ENCODE measurements at regions of chr3 and their contacts with region 1.

Region 1: DNA sequence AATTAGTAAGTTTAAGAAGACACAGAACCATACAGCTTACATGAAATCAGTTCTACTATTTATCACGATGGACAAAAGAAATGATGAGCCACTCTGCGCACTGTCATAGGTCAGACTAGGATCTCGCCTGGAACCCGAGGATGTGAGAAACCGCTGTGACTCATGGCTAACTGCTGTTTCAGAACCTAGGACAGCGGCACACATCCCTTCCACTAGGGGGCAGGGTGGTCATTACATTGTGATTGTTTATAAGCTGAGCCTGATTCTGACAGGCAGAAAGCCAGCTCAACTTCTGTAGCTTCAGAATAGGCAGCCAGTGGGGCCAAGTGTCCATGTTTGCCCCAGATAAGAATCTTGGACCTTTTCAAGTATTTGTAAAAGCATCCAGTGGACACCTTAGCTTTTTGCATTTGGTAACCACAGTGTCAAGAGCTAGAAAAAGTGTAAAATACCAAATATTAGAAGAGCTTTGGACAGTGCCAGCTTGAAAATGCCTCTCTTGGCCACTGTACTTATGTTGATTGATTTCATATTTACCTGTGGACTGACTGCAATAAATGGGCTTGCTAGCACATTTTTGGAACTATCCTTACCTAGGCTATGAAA is 115.8 kb downstream of the KBTBD8 start:
- DNase-seq: peak; percentile 70 to 93
- H3K4me3 ChIP-seq: no peak overlapping the region
- H3K27ac ChIP-seq: no peak overlapping the region
- H3K4me1 ChIP-seq: peaks cover 0 to 3% (median 0%) of the 10 kb centered on the region in 4 experiments; a peak in 2 of 7 replicates
- H3K27me3 ChIP-seq: no peaks in the 10 kb centered on the region
- CTCF ChIP-seq: peak; percentile 89 to 99 (median 94)
- EP300 ChIP-seq: no peak
- POLR2A ChIP-seq: no peak
- RAD21 ChIP-seq: peak; percentile 96 to 97

Region 2: DNA sequence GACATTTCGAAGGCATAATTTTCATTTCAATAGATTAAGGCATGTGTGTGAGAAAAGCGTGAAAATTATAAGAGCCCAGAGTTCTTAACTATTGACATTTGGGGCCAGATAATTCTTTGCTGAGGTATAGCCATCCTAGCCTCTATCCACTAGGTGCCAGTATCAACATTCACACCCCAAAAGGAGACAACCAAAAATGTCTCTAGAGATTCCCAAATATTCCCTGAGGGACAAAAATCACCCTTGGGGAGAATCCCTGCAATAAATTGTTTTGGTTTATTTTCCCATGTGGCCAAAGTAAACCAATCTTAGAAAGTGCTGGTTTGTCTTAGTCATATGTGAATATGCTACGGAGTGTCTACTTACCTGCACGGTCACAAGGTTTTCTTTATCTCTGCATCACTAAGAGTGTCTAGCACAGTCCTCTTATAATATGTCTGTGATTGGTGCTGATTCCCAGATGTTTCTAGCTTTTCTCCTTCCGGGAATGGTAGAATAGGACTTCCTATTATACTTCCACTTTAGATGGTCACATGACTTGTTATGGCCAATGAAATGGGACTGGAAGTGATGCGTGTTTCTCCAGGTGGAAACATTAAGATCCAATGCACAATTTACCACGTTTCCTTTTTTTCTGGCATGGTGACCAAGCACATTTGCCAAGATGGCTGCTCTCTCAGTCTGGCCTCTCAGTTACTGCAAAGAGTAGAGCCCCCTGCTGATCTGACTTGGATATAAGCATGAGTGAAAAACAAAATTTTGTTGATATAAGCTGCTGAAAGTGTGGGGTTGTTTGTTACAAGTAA is 123.8 kb before region 1 on chr3:
- CTCF ChIA-PET with region 1: interaction called, 15 read pairs
- POLR2A ChIA-PET with region 1: no interaction called
- DNase-seq: no peak
- H3K4me3 ChIP-seq: peak overlapping the region in 1 of 4 experiments; percentile 42; a peak in 2 of 8 replicates
- H3K27ac ChIP-seq: no peak overlapping the region
- H3K4me1 ChIP-seq: peaks cover 5 to 13% (median 9%) of the 10 kb centered on the region in 4 experiments; a peak in 6 of 7 replicates
- H3K27me3 ChIP-seq: no peaks in the 10 kb centered on the region
- CTCF ChIP-seq: peak in 2 of 3 experiments; percentile 46 to 53; a peak in 3 of 4 replicates
- EP300 ChIP-seq: no peak
- POLR2A ChIP-seq: no peak
- RAD21 ChIP-seq: peak; percentile 74 to 80

Region 3: DNA sequence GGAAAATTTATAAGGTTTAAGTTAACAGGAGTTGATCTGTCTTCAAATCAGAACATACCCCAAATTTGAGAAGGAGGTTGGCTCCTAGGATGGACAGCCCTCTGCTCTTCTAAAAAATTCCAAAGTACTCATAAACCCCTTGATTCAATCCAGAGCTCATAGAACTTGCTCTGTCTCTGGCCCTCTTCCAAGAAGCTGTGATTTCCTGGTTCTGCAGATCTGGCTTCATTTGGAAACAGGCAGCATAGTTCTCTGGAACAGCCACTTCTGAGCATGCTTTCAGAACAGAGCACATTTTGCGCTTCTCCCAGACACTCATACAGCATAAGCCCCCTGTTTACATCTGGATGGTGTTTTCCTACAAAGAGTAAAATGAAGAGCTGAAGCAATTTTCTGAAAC is 19.1 kb before region 1 on chr3:
- CTCF ChIA-PET with region 1: interaction called, 25 read pairs
- POLR2A ChIA-PET with region 1: no interaction called
- DNase-seq: no peak
- H3K4me3 ChIP-seq: no peak overlapping the region
- H3K27ac ChIP-seq: no peak overlapping the region
- H3K4me1 ChIP-seq: peaks cover 0 to 11% (median 0%) of the 10 kb centered on the region in 4 experiments; a peak in 1 of 7 replicates
- H3K27me3 ChIP-seq: no peaks in the 10 kb centered on the region
- CTCF ChIP-seq: no peak
- EP300 ChIP-seq: no peak
- POLR2A ChIP-seq: no peak
- RAD21 ChIP-seq: no peak

Region 4: GRCh38 chr3:67123914-67124313 is 10.0 kb after region 1 on chr3:
- CTCF ChIA-PET with region 1: interaction called, 10 read pairs
- POLR2A ChIA-PET with region 1: no interaction called
- DNase-seq: no peak
- H3K4me3 ChIP-seq: no peak overlapping the region
- H3K27ac ChIP-seq: no peak overlapping the region
- H3K4me1 ChIP-seq: no peaks in the 10 kb centered on the region
- H3K27me3 ChIP-seq: no peaks in the 10 kb centered on the region
- CTCF ChIP-seq: no peak
- EP300 ChIP-seq: no peak
- POLR2A ChIP-seq: no peak
- RAD21 ChIP-seq: no peak

Region 5: GRCh38 chr3:67357610-67358458 is 243.9 kb after region 1 on chr3:
- CTCF ChIA-PET with region 1: interaction called, 19 read pairs
- POLR2A ChIA-PET with region 1: no interaction called
- DNase-seq: peak; percentile 49 to 71
- H3K4me3 ChIP-seq: no peak overlapping the region
- H3K27ac ChIP-seq: no peak overlapping the region
- H3K4me1 ChIP-seq: peaks cover 0 to 5% (median under 1%) of the 10 kb centered on the region in 4 experiments; a peak in 3 of 7 replicates
- H3K27me3 ChIP-seq: no peaks in the 10 kb centered on the region
- CTCF ChIP-seq: peak; percentile 48 to 77 (median 56)
- EP300 ChIP-seq: no peak
- POLR2A ChIP-seq: no peak
- RAD21 ChIP-seq: peak; percentile 78 to 80

Region 6: GRCh38 chr3:67384760-67385397 is 271.0 kb after region 1 on chr3:
- CTCF ChIA-PET with region 1: interaction called, 32 read pairs
- POLR2A ChIA-PET with region 1: no interaction called
- DNase-seq: peak; percentile 43 to 83
- H3K4me3 ChIP-seq: no peak overlapping the region
- H3K27ac ChIP-seq: no peak overlapping the region
- H3K4me1 ChIP-seq: peaks cover 0 to 8% (median 4%) of the 10 kb centered on the region in 4 experiments; a peak in 2 of 7 replicates
- H3K27me3 ChIP-seq: no peaks in the 10 kb centered on the region
- CTCF ChIP-seq: peak; percentile 77 to 95 (median 78)
- EP300 ChIP-seq: no peak
- POLR2A ChIP-seq: no peak
- RAD21 ChIP-seq: peak; percentile 81 to 85

Measured in H1 (cell line).